Calu3 (cell line): ENCODE measurements at regions of chr1 and their contacts with region 1.

Region 1: GRCh38 chr1:207751790-207752455 is at the start of gene CD46:
- DNase-seq: peak; percentile 99
- H3K4me3 Mint-ChIP-seq: peak within 1 kb of the TSS; percentile 94
- H3K27ac Mint-ChIP-seq: peak within 1 kb of the TSS; percentile 91
- H3K4me1 Mint-ChIP-seq: peaks cover 66% of the 10 kb centered on the region
- H3K27me3 Mint-ChIP-seq: no peaks in the 10 kb centered on the region
- CTCF ChIP-seq: no peak
- total RNA-seq, gene CD46: 487 and 635 TPM in 2 replicates

Region 2: GRCh38 chr1:207454046-207454964 is 297.6 kb before region 1 on chr1 and contains the start of gene CR2:
- CTCF ChIA-PET with region 1: no interaction called
- intact Hi-C with region 1: no loop called
- DNase-seq: peak; percentile 69
- H3K4me3 Mint-ChIP-seq: peak within 1 kb of the TSS; percentile 54
- H3K27ac Mint-ChIP-seq: no peak within 1 kb of the TSS
- H3K4me1 Mint-ChIP-seq: no peaks in the 10 kb centered on the region
- H3K27me3 Mint-ChIP-seq: peaks cover 28% of the 10 kb centered on the region
- CTCF ChIP-seq: peak; percentile 25
- total RNA-seq, gene CR2: 0.83 and 2.6 TPM in 2 replicates

Region 3: DNA sequence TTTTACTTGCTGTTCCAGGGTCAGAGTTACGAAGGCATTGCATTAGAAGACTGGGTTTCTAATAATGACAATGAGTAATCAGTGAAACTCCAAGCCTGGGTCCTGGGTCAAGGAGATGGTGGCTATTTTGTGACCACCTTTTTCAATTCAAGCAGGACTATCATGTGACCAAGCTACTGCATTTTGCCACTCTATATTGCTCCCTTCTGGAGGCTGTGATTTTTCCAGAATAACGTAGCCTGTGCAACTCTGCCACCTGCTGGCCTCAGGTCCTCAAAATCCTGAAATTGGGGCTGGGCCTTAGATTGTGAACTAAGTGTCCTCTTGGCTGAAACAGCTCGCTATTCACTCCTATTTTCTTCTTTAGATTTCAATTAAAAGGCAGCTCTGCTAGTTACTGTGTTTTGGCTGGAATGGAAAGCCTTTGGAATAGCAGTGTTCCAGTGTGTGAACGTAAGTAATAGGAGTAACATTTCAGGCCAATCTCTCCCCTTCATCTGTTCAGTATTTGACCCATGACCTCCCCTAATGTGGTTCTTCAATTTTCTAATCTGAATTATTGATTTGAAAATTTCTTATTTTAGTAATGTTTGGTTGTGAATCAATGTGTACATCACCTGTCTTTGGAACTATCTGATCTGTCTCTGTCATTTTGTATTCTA is 53.0 kb before region 1 on chr1:
- CTCF ChIA-PET with region 1: interaction called, 6 read pairs
- intact Hi-C with region 1: loop called (anchors 5 kb)
- DNase-seq: peak; percentile 78
- H3K4me3 Mint-ChIP-seq: no peak overlapping the region
- H3K27ac Mint-ChIP-seq: no peak overlapping the region
- H3K4me1 Mint-ChIP-seq: no peaks in the 10 kb centered on the region
- H3K27me3 Mint-ChIP-seq: no peaks in the 10 kb centered on the region
- CTCF ChIP-seq: peak; percentile 76

Region 4: GRCh38 chr1:207848234-207848633 is 96.3 kb after region 1 on chr1:
- CTCF ChIA-PET with region 1: no interaction called
- intact Hi-C with region 1: no loop called
- DNase-seq: peak; percentile 64
- H3K4me3 Mint-ChIP-seq: no peak overlapping the region
- H3K27ac Mint-ChIP-seq: peak overlapping the region; percentile 62
- H3K4me1 Mint-ChIP-seq: peaks cover 19% of the 10 kb centered on the region
- H3K27me3 Mint-ChIP-seq: no peaks in the 10 kb centered on the region
- CTCF ChIP-seq: no peak